Activated naive CD4-positive, alpha-beta T cell treated with anti-CD3 and anti-CD28 coated beads for 36 hours (primary cell): ENCODE measurements at regions of chr16 and their contacts with region 1.

Region 1: GRCh38 chr16:4288148-4288921 is 15.5 kb upstream of the TFAP4 start:
- DNase-seq: peak; percentile 84
- H3K4me3 Mint-ChIP-seq: no peak overlapping the region
- H3K27ac Mint-ChIP-seq: no peak overlapping the region
- H3K4me1 Mint-ChIP-seq: peaks cover 9% of the 10 kb centered on the region
- H3K27me3 Mint-ChIP-seq: peaks cover 9% of the 10 kb centered on the region

Region 2: GRCh38 chr16:4298761-4299522 is 10.6 kb after region 1 on chr16:
- CTCF ChIA-PET with region 1: interaction called, 13 read pairs
- intact Hi-C with region 1: no loop called
- DNase-seq: no peak
- H3K4me3 Mint-ChIP-seq: no peak overlapping the region
- H3K27ac Mint-ChIP-seq: no peak overlapping the region
- H3K4me1 Mint-ChIP-seq: peaks cover 2% of the 10 kb centered on the region
- H3K27me3 Mint-ChIP-seq: no peaks in the 10 kb centered on the region

Region 3: GRCh38 chr16:4768549-4769305 is 480.4 kb after region 1 on chr16:
- CTCF ChIA-PET with region 1: no interaction called
- intact Hi-C with region 1: no loop called
- DNase-seq: peak; percentile 92
- H3K4me3 Mint-ChIP-seq: peak overlapping the region; percentile 93
- H3K27ac Mint-ChIP-seq: peak overlapping the region; percentile 93
- H3K4me1 Mint-ChIP-seq: peaks cover 35% of the 10 kb centered on the region
- H3K27me3 Mint-ChIP-seq: no peaks in the 10 kb centered on the region